MCF 10A (cell line): ENCODE measurements at regions of chr1 and their contacts with region 1.

Region 1: GRCh38 chr1:193927550-193927949 is 741.1 kb upstream of the B3GALT2 start:
- DNase-seq: peak; percentile 10
- H3K4me3 Mint-ChIP-seq: no peak overlapping the region
- H3K27ac Mint-ChIP-seq: no peak overlapping the region
- H3K4me1 Mint-ChIP-seq: no peaks in the 10 kb centered on the region
- H3K27me3 Mint-ChIP-seq: no peaks in the 10 kb centered on the region
- CTCF ChIP-seq: no peak

Region 2: DNA sequence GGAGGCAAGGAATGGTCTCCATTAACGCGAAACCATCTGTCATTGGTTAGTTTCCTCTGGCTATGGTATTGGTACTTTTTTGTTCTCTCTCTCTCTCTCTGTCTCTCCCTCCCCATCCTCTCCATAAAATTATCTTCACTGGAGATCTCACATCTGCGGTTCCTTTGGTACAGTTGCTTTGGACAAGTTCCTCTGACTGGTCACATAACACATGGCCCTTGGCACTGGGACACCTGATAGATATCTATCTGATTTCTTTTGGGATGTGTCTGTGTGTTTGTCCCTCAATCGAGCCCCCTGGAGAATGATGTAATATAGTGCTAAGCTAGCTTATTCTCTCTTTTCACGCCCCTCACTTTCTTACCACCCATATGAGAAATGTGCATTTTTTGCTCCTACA is 59.1 kb before region 1 on chr1:
- CTCF ChIA-PET with region 1: no interaction called
- POLR2A ChIA-PET with region 1: no interaction called
- intact Hi-C with region 1: loop called (anchors 2 kb)
- DNase-seq: no peak
- H3K4me3 Mint-ChIP-seq: no peak overlapping the region
- H3K27ac Mint-ChIP-seq: no peak overlapping the region
- H3K4me1 Mint-ChIP-seq: no peaks in the 10 kb centered on the region
- H3K27me3 Mint-ChIP-seq: no peaks in the 10 kb centered on the region
- CTCF ChIP-seq: no peak

Region 3: DNA sequence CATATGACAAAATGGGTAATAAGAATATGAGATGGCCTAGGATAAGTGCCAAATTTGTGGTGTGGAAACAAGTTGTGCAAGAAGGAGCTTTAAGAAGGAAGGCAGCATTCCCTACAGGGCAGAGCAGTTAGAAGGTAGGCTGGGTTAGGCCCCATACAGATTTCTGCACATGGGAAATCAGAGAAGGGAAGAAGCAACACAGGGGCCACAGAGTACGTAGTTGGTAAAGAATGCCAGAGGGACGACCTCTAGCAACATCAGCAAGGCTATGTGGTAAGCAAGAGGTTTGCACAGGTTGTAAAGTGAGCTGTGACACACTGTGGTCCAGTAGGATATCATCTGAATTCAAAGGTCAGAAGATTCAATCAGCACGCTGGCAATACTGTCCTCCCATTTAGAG is 24.4 kb after region 1 on chr1:
- CTCF ChIA-PET with region 1: no interaction called
- POLR2A ChIA-PET with region 1: no interaction called
- intact Hi-C with region 1: no loop called
- DNase-seq: peak; percentile 66
- H3K4me3 Mint-ChIP-seq: no peak overlapping the region
- H3K27ac Mint-ChIP-seq: no peak overlapping the region
- H3K4me1 Mint-ChIP-seq: peaks cover 13% of the 10 kb centered on the region
- H3K27me3 Mint-ChIP-seq: no peaks in the 10 kb centered on the region
- CTCF ChIP-seq: no peak